ENCODE measurements at regions of chr4 and their contacts with region 1.

Region 1: DNA sequence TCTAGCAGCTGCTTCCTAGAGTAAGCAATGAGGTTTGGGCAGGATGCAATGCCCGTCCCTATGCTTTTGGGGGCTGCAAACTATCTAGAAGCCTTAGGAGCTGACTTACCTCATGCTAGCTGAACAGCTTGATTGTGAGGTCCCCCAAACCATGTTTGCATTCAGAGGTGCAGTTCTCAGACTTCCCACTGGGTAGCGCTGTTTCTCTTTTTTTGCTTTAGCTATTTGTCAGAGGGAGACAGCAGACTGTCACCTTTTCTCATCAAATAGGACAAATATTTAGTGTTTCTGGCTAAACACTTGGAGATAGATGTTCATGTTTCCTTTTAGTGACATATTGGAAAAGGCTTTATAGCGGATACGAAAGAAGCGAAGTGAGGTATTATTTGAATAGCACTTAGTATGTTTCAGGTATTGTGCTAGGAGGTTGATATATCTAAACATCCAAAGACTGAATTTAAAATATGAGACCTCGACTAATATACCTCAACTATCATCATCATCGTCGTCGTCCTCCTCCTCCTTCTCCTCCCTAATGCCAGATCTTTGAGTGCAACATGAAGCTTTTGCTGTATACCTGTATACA is 18.7 kb upstream of the TMEM192 start:
- DNase-seq: peak; percentile 85
- ATAC-seq: peak; percentile 82
- H3K4me3 Mint-ChIP-seq: no peak overlapping the region
- H3K27ac Mint-ChIP-seq: no peak overlapping the region
- H3K4me1 Mint-ChIP-seq: peaks cover 3% of the 10 kb centered on the region
- H3K27me3 Mint-ChIP-seq: peaks cover 6% of the 10 kb centered on the region

Region 2: DNA sequence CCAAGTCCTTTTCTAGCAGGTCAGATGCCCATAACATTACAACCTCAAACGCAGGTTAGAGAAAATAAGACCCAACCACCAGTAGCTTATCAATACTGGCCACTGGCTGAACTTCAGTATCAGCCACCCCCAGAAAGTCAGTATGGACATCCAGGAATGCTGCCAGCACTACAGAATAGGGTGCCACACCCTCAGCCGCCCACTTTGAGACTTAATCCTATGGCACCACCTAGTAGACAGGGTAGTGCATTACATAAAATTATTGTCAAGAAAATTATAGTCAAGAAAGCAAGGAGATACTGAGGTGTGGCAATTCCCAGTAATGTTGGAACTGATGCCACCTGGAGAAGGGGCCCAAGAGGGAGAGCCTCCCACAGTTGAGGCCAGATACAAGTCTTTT is 134.0 kb before region 1 on chr4:
- CTCF ChIA-PET with region 1: no interaction called
- POLR2A ChIA-PET with region 1: no interaction called
- intact Hi-C with region 1: no loop called
- DNase-seq: no peak
- ATAC-seq: no peak
- H3K4me3 Mint-ChIP-seq: no peak overlapping the region
- H3K27ac Mint-ChIP-seq: no peak overlapping the region
- H3K4me1 Mint-ChIP-seq: no peaks in the 10 kb centered on the region
- H3K27me3 Mint-ChIP-seq: peaks cover 10% of the 10 kb centered on the region

Region 3: DNA sequence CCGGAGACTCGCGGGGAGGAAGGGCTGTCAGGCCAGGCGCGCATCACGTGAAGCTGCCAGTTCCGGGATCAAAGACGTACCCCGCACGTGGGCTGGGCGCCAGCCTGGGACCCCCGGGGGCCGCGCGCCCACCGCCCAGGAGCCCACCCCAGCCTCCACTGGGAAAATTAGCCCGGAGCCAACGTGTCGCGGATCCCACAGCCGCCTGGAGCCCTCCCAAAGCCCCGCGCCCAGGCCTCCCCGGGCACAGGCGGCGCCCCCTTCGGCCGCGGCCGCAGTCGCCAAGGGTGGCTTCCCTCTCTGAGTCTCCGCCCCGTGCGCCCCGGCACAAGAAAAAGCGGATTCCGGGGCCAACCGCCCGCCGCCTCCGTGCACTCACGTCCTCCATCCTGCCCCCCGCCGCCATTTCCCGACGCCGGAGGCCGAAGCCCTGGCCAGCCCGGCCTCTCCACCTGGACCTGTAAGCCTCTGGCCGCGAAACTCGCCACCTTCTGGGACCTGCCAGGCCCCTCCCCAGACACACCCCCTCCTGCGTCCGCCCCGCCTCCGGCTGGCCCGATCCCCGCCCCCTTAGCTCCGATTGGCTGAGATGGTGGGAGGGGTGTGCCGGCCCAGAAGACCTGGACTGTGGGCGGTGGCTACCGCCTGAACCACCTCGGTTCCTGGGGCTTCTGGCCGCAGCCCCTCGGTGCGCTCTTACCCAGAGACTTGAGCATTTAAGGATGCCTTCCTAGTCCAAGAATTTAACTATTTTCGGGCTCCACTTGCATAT is 18.8 kb before region 1 on chr4 and contains the start of gene TMEM192:
- CTCF ChIA-PET with region 1: interaction called, 25 read pairs
- POLR2A ChIA-PET with region 1: no interaction called
- intact Hi-C with region 1: no loop called
- DNase-seq: peak; percentile 95
- ATAC-seq: peak; percentile 97
- H3K4me3 Mint-ChIP-seq: peak within 1 kb of the TSS; percentile 94
- H3K27ac Mint-ChIP-seq: peak within 1 kb of the TSS; percentile 88
- H3K4me1 Mint-ChIP-seq: peaks cover 17% of the 10 kb centered on the region
- H3K27me3 Mint-ChIP-seq: no peaks in the 10 kb centered on the region
- total RNA-seq, gene TMEM192: 8.8 TPM

Region 4: GRCh38 chr4:165207431-165208220 is 76.3 kb after region 1 on chr4 and contains the start of gene KLHL2:
- CTCF ChIA-PET with region 1: interaction called, 3 read pairs
- POLR2A ChIA-PET with region 1: no interaction called
- intact Hi-C with region 1: loop called in 1 of 2 experiments (anchors 1 kb)
- DNase-seq: peak; percentile 82
- ATAC-seq: peak; percentile 65
- H3K4me3 Mint-ChIP-seq: peak within 1 kb of the TSS; percentile 86
- H3K27ac Mint-ChIP-seq: peak within 1 kb of the TSS; percentile 89
- H3K4me1 Mint-ChIP-seq: peaks cover 68% of the 10 kb centered on the region
- H3K27me3 Mint-ChIP-seq: no peaks in the 10 kb centered on the region
- total RNA-seq, gene KLHL2: 20.9 to 22.1 TPM

Region 5: GRCh38 chr4:165343353-165344191 is 212.2 kb after region 1 on chr4:
- CTCF ChIA-PET with region 1: interaction called, 69 read pairs
- POLR2A ChIA-PET with region 1: no interaction called
- intact Hi-C with region 1: loop called (anchors 1 kb)
- DNase-seq: peak; percentile 37
- ATAC-seq: no peak
- H3K4me3 Mint-ChIP-seq: no peak overlapping the region
- H3K27ac Mint-ChIP-seq: no peak overlapping the region
- H3K4me1 Mint-ChIP-seq: no peaks in the 10 kb centered on the region
- H3K27me3 Mint-ChIP-seq: no peaks in the 10 kb centered on the region

Region 6: DNA sequence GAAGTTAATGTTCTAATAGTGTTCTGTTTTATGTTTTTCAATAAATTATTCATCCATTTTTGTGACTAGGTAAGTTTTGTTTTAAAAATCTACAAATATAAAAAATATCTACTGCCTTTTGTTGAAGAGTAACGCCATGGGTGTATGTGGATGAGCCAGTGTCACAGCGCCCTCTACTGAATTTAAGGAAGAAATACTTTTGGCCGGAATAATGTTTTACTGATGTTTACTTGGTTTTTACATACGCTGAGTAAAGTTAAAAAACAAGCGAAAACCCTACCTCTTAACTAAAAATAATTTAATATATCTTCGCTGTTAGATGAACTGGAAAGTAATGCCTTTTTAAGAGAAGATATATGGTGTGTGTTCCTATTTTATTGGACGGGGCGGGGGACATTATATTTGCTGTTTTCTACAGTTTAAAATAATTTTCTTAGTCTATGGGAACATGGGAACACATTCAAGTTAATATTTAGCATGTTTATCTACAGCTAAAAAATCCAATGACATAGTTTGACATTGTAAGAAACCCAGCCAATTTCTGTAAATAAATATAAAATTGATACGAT is 333.6 kb after region 1 on chr4:
- CTCF ChIA-PET with region 1: interaction called, 41 read pairs
- POLR2A ChIA-PET with region 1: no interaction called
- intact Hi-C with region 1: loop called (anchors 1 kb)
- DNase-seq: peak; percentile 39
- ATAC-seq: peak; percentile 68
- H3K4me3 Mint-ChIP-seq: no peak overlapping the region
- H3K27ac Mint-ChIP-seq: no peak overlapping the region
- H3K4me1 Mint-ChIP-seq: no peaks in the 10 kb centered on the region
- H3K27me3 Mint-ChIP-seq: no peaks in the 10 kb centered on the region

Region 7: GRCh38 chr4:165953181-165953580 is 821.8 kb after region 1 on chr4:
- CTCF ChIA-PET with region 1: no interaction called
- POLR2A ChIA-PET with region 1: no interaction called
- intact Hi-C with region 1: no loop called
- DNase-seq: no peak
- ATAC-seq: no peak
- H3K4me3 Mint-ChIP-seq: no peak overlapping the region
- H3K27ac Mint-ChIP-seq: no peak overlapping the region
- H3K4me1 Mint-ChIP-seq: no peaks in the 10 kb centered on the region
- H3K27me3 Mint-ChIP-seq: no peaks in the 10 kb centered on the region

Measured in activated CD4-positive, alpha-beta T cell treated with anti-CD3 and anti-CD28 coated beads for 36 hours (primary cell).